ENCODE measurements at regions of chr1 and their contacts with region 1.

Region 1: DNA sequence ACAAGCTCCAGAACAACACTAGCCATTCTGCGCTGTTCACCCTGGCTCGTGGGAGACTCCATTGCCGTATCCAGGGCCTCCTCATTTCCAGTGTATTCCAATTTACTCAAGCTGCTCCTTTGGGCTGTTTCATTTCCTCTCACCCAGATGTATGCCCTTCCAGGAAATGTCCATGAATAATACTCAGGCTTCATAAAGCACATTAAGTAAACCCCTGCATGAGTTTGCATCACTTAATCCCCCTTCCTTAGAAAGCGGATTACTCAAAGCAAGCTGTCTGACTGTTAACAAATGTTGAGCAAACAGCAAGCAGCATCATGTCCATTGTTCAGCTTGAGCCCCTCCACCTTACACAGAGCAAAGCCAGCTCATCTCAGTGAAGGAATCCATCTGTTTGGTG is 403.6 kb upstream of the PBX1 start:
- DNase-seq: no peak
- ATAC-seq: no peak
- H3K4me3 ChIP-seq: no peak overlapping the region
- H3K27ac ChIP-seq: no peak overlapping the region
- H3K4me1 ChIP-seq: no peaks in the 10 kb centered on the region
- H3K27me3 ChIP-seq: peaks cover 0 to 4% (median 0%) of the 10 kb centered on the region in 4 donors
- CTCF ChIP-seq: no peak

Region 2: DNA sequence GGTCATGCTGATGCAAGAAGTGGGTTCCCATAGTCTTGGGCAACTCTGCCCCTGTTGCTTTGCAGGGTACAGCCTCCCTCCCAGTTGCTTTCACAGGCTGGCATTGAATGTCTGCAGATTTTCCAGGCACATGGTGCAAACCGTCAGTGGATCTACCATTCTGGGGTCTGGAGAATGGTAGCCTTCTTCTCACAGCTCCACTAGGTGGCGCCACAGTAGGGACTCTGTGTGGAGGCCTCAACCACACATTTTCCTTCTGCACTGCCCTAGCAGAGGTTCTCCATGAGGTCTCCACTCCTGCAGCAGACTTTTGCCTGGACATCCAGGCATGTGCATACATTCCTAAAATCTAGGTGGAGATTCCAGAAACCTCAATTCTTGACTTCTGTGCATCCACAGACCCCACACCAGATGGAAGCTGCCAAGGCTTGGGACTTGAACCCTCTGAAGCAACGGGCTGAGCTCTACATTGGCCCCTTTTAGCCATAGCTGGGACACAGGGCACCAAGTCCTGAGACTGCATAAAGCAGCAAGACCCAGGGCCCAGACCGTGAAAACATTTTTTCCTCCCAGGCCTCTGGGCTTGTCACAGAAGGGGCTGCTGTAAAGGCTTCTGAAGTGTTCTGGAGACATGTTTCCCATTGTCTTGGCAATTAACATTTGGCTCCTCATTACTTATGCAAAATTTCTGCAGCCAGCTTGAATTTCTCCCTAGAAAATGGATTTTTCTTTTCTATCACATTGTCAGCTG is 62.6 kb before region 1 on chr1:
- intact Hi-C with region 1: loop called in 1 of 3 experiments (anchors 10 kb)
- DNase-seq: no peak
- ATAC-seq: no peak
- H3K4me3 ChIP-seq: no peak overlapping the region
- H3K27ac ChIP-seq: no peak overlapping the region
- H3K4me1 ChIP-seq: no peaks in the 10 kb centered on the region
- H3K27me3 ChIP-seq: no peaks in the 10 kb centered on the region
- CTCF ChIP-seq: no peak

Region 3: GRCh38 chr1:164999146-164999545 is 843.8 kb after region 1 on chr1:
- intact Hi-C with region 1: no loop called
- DNase-seq: no peak
- ATAC-seq: no peak
- H3K4me3 ChIP-seq: no peak overlapping the region
- H3K27ac ChIP-seq: no peak overlapping the region
- H3K4me1 ChIP-seq: no peaks in the 10 kb centered on the region
- H3K27me3 ChIP-seq: peaks cover 0 to 8% (median 0%) of the 10 kb centered on the region in 4 donors
- CTCF ChIP-seq: no peak